Activated CD4-positive, alpha-beta T cell treated with anti-CD3 and anti-CD28 coated beads, Interleukin-2, amount 10 ng/mL, durations not matched to agents 7 days and 5 days (primary cell): ENCODE measurements at regions of chr14 and their contacts with region 1.

Region 1: DNA sequence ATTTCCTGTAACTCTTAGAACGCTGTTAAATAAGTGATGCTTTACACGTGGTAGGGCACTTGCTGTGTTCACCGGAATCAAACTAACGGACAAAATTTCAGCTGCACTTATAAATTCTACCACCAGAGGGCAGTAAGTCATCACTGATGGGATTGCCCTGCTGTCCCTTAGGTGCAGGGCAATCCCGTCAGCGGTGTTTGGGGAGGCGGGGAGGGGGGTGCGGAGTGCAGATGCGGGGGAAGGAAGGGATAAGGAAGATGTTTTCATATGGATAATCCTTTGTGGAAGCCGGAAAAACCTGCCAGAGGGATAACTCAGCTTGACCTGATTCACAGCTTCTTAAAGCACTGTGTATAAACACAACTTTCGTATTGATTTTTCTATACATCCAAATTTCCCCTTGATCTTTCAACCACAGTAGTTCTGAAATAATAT is 21.7 kb upstream of the SLC10A1 start:
- DNase-seq: peak; percentile 73
- H3K4me3 Mint-ChIP-seq: no peak overlapping the region
- H3K27ac Mint-ChIP-seq: no peak overlapping the region
- H3K4me1 Mint-ChIP-seq: peaks cover 2% of the 10 kb centered on the region
- H3K27me3 Mint-ChIP-seq: peaks cover 4% of the 10 kb centered on the region

Region 2: GRCh38 chr14:70027785-70028428 is 209.1 kb after region 1 on chr14:
- CTCF ChIA-PET with region 1: interaction called, 11 read pairs
- POLR2A ChIA-PET with region 1: no interaction called
- DNase-seq: peak; percentile 69
- H3K4me3 Mint-ChIP-seq: no peak overlapping the region
- H3K27ac Mint-ChIP-seq: no peak overlapping the region
- H3K4me1 Mint-ChIP-seq: peaks cover 2% of the 10 kb centered on the region
- H3K27me3 Mint-ChIP-seq: peaks cover 5% of the 10 kb centered on the region